ENCODE measurements at regions of chr4 and their contacts with region 1.

Region 1: DNA sequence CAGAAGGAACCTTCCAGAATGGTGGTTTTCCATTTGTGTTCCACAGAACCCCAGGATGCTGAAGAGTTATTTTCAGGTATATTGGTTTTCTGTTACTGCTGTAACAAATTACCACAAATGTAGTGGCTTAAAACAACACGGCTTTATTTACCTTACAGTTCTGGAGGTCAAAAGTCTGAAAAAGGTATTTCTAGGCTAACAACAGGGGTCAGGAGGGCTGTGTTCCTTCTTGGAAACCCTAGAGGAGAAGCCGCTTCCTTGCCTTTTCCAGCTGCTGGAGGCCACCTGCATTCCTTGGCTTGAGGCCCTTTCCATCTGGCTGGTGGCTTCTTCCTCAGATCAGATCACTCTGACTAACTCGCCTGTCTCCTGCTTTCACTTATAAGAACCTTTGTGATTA is 58.0 kb upstream of the HPSE start:
- DNase-seq: no peak
- H3K4me3 ChIP-seq: no peak overlapping the region
- H3K27ac ChIP-seq: no peak overlapping the region
- H3K4me1 ChIP-seq: 0 out of 2 replicates have a peak, but pooled peaks cover 2% of the 10 kb centered on the region
- H3K27me3 ChIP-seq: no peaks in the 10 kb centered on the region
- CTCF ChIP-seq: no peak

Region 2: DNA sequence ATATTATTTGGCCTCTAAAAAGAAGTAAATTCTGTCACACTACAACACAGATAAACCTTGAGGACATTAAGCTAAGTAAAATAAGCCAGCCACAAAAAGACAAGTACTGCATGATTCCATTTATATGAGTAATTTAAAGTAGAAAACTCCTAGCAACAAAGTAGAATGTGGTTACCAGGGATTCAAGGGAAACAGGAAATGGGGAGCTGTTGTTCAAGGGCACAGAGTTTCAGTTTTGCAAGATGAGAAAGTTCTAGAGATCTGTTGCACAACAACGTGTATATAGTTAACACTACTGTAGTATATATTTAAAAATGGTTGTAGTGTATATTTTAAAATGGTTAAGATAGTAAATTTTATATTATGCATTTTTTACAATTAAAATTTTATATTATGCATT is 527.0 kb before region 1 on chr4:
- CTCF ChIA-PET with region 1: no interaction called
- POLR2A ChIA-PET with region 1: no interaction called
- intact Hi-C with region 1: no loop called
- DNase-seq: peak; percentile 16 to 86
- H3K4me3 ChIP-seq: no peak overlapping the region
- H3K27ac ChIP-seq: peak overlapping the region; percentile 81
- H3K4me1 ChIP-seq: peaks cover 5% of the 10 kb centered on the region; the same call in 1 of the 2 replicates
- H3K27me3 ChIP-seq: no peaks in the 10 kb centered on the region
- CTCF ChIP-seq: no peak

Region 3: GRCh38 chr4:83362492-83363329 is 29.9 kb before region 1 on chr4:
- CTCF ChIA-PET with region 1: no interaction called
- POLR2A ChIA-PET with region 1: interaction called, 29 read pairs
- intact Hi-C with region 1: no loop called
- DNase-seq: no peak
- H3K4me3 ChIP-seq: no peak overlapping the region
- H3K27ac ChIP-seq: no peak overlapping the region
- H3K4me1 ChIP-seq: peaks cover 19% of the 10 kb centered on the region
- H3K27me3 ChIP-seq: no peaks in the 10 kb centered on the region
- CTCF ChIP-seq: peak; percentile 54

Region 4: GRCh38 chr4:83413676-83414075 is 21.1 kb after region 1 on chr4:
- CTCF ChIA-PET with region 1: no interaction called
- POLR2A ChIA-PET with region 1: no interaction called
- intact Hi-C with region 1: no loop called
- DNase-seq: no peak
- H3K4me3 ChIP-seq: no peak overlapping the region
- H3K27ac ChIP-seq: no peak overlapping the region
- H3K4me1 ChIP-seq: no peaks in the 10 kb centered on the region
- H3K27me3 ChIP-seq: no peaks in the 10 kb centered on the region
- CTCF ChIP-seq: no peak